ENCODE measurements at regions of chrX and their contacts with region 1.

Region 1: DNA sequence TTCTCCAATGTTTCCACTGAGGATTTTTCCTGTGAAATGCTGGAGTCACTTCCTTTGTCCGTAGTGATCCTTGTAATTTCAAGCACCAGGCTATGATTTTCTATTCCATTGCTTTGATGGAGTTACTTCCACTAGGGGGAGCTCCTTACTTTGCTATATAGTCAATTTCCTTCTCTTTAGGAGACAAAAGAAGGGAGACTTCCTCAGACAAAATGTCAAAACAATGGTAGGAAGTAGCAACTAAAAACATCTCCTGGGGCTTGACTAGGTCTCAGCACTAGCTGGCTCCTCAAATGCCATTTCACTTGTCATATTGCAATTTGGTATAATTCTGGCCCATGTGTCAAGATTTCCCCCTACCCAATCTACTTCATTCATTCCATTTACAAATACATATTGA is 24.1 kb downstream of the ZCCHC12 start:
- DNase-seq: no peak
- ATAC-seq: peak; percentile 74

Region 2: GRCh38 chrX:119004920-119005524 is 157.3 kb after region 1 on chrX:
- intact Hi-C with region 1: loop called in 1 of 2 experiments (anchors 10 kb)
- DNase-seq: peak; percentile 28 to 60
- ATAC-seq: peak; percentile 81

Region 3: GRCh38 chrX:119067023-119067739 is 219.5 kb after region 1 on chrX:
- intact Hi-C with region 1: loop called in 1 of 2 experiments (anchors 10 kb)
- DNase-seq: peak in 1 of 2 donors; percentile 60
- ATAC-seq: peak; percentile 80